ENCODE measurements at regions of chr6 and their contacts with region 1.

Region 1: GRCh38 chr6:155510879-155511278 is 55.2 kb upstream of the NOX3 start:
- DNase-seq: no peak
- ATAC-seq: no peak
- H3K4me3 ChIP-seq: no peak overlapping the region
- H3K27ac ChIP-seq: no peak overlapping the region
- H3K4me1 ChIP-seq: no peaks in the 10 kb centered on the region
- H3K27me3 ChIP-seq: no peaks in the 10 kb centered on the region
- CTCF ChIP-seq: no peak

Region 2: GRCh38 chr6:155444120-155444917 is 66.6 kb before region 1 on chr6:
- CTCF ChIA-PET with region 1: no interaction called
- POLR2A ChIA-PET with region 1: no interaction called
- in situ Hi-C with region 1: no loop called
- intact Hi-C with region 1: no loop called
- DNase-seq: peak; percentile 28
- ATAC-seq: peak; percentile 82; the same call in 1 of the 2 replicates
- H3K4me3 ChIP-seq: no peak overlapping the region
- H3K27ac ChIP-seq: peak overlapping the region; percentile 49
- H3K4me1 ChIP-seq: 0 out of 2 replicates have a peak, but pooled peaks cover 7% of the 10 kb centered on the region
- H3K27me3 ChIP-seq: no peaks in the 10 kb centered on the region
- CTCF ChIP-seq: no peak

Region 3: DNA sequence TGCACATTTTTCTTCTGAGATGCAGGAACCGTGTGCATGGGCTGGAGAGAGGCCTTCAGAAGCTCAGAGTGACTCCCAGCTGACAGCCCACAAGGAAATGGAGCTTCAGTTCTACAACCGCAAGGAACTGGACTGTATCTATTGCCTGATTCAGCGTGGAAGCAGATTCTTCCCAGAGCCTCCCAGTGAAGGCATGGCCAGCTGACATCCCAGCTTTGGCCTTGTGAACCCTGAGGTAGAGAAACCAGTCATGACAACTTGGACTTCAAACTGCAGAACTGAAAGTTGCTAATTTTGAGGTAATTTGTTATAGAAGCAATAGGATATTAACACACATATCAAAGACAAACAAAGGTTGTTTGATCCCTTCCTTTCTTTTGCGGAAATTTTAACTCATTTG is 39.0 kb after region 1 on chr6:
- CTCF ChIA-PET with region 1: interaction called, 18 read pairs
- POLR2A ChIA-PET with region 1: no interaction called
- in situ Hi-C with region 1: no loop called
- intact Hi-C with region 1: no loop called
- DNase-seq: no peak
- ATAC-seq: no peak
- H3K4me3 ChIP-seq: no peak overlapping the region
- H3K27ac ChIP-seq: no peak overlapping the region
- H3K4me1 ChIP-seq: no peaks in the 10 kb centered on the region
- H3K27me3 ChIP-seq: no peaks in the 10 kb centered on the region
- CTCF ChIP-seq: no peak

Region 4: GRCh38 chr6:155580904-155581303 is 70.0 kb after region 1 on chr6:
- CTCF ChIA-PET with region 1: no interaction called
- POLR2A ChIA-PET with region 1: no interaction called
- in situ Hi-C with region 1: no loop called
- intact Hi-C with region 1: no loop called
- DNase-seq: no peak
- ATAC-seq: no peak
- H3K4me3 ChIP-seq: no peak overlapping the region
- H3K27ac ChIP-seq: no peak overlapping the region
- H3K4me1 ChIP-seq: no peaks in the 10 kb centered on the region
- H3K27me3 ChIP-seq: no peaks in the 10 kb centered on the region
- CTCF ChIP-seq: peak; percentile 32; the same call in 1 of the 2 replicates